ENCODE measurements at regions of chr16 and their contacts with region 1.

Region 1: GRCh38 chr16:19886073-19886941 is 1.7 kb upstream of the GPRC5B start:
- DNase-seq: peak; percentile 94
- H3K4me3 ChIP-seq: peak overlapping the region; percentile 65 to 85 (median 68)
- H3K27ac ChIP-seq: no peak overlapping the region
- H3K4me1 ChIP-seq: peaks cover 12 to 43% (median 37%) of the 10 kb centered on the region in 4 donors
- H3K27me3 ChIP-seq: peaks cover 0 to 32% (median 3%) of the 10 kb centered on the region in 4 donors
- CTCF ChIP-seq: peak; percentile 98 to 99 (median 99)
- EP300 ChIP-seq: no peak
- POLR2A ChIP-seq: no peak

Region 2: GRCh38 chr16:19555162-19555937 is 331.0 kb before region 1 on chr16 and contains the start of gene VPS35L:
- intact Hi-C with region 1: loop called (anchors 1 kb)
- DNase-seq: peak; percentile 99
- H3K4me3 ChIP-seq: peak within 1 kb of the TSS; percentile 78 to 93 (median 90)
- H3K27ac ChIP-seq: peak within 1 kb of the TSS; percentile 86 to 89 (median 88)
- H3K4me1 ChIP-seq: peaks cover 5 to 32% (median 23%) of the 10 kb centered on the region in 4 donors
- H3K27me3 ChIP-seq: no peaks in the 10 kb centered on the region
- CTCF ChIP-seq: peak; percentile 65 to 74 (median 70)
- EP300 ChIP-seq: no peak
- POLR2A ChIP-seq: no peak
- total RNA-seq, gene VPS35L: 35.5 to 47.0 (median 38.1) TPM

Region 3: DNA sequence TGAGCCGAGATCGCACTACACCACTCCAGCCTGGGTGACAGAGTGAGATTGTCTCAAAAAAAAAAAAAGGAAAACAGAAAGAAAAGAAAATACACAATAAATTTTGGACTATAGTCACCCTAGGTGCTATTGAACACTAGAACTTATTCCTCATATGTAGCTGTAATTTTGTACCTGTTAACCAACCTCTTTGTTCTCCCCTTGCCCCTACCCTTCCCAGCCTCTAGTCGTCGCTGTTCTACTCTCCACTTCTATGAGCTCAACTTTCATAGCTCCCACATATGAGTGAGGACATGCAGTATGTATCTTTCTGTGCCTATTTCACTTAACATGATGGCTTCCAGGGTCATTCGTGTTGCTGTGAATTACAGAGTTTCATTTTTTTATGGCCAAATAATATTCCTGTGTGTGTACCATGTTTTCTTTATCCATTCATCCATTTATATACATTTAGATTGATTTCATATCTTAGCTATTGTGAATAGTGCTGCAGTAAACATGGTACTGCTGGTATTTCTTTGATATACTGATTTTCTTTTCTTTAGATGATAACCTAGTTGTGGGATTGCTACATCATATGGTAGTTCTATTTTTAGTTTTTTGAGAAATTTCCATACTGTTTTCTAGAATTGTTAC is 302.5 kb before region 1 on chr16:
- intact Hi-C with region 1: loop called (anchors 5 kb)
- DNase-seq: no peak
- H3K4me3 ChIP-seq: no peak overlapping the region
- H3K27ac ChIP-seq: no peak overlapping the region
- H3K4me1 ChIP-seq: peaks cover 11 to 17% (median 15%) of the 10 kb centered on the region in 4 donors
- H3K27me3 ChIP-seq: no peaks in the 10 kb centered on the region
- CTCF ChIP-seq: peak; percentile 65 to 91 (median 69)
- EP300 ChIP-seq: no peak
- POLR2A ChIP-seq: no peak

Region 4: GRCh38 chr16:19601083-19601976 is 285.0 kb before region 1 on chr16:
- intact Hi-C with region 1: loop called (anchors 2 kb)
- DNase-seq: no peak
- H3K4me3 ChIP-seq: no peak overlapping the region
- H3K27ac ChIP-seq: no peak overlapping the region
- H3K4me1 ChIP-seq: peaks cover 0 to 6% (median 2%) of the 10 kb centered on the region in 4 donors
- H3K27me3 ChIP-seq: no peaks in the 10 kb centered on the region
- CTCF ChIP-seq: peak; percentile 49 to 63 (median 62)
- EP300 ChIP-seq: no peak
- POLR2A ChIP-seq: no peak

Region 5: GRCh38 chr16:19717771-19718602 is 168.3 kb before region 1 on chr16 and contains the starts of genes IQCK and KNOP1:
- intact Hi-C with region 1: loop called (anchors 5 kb)
- DNase-seq: peak; percentile 97
- H3K4me3 ChIP-seq: peak within 1 kb of the TSS; percentile 86 to 97 (median 92)
- H3K27ac ChIP-seq: peak within 1 kb of the TSS; percentile 77 to 93 (median 86)
- H3K4me1 ChIP-seq: peaks cover 29 to 40% (median 34%) of the 10 kb centered on the region in 4 donors
- H3K27me3 ChIP-seq: no peaks in the 10 kb centered on the region
- CTCF ChIP-seq: peak in 1 of 3 experiments; percentile 10
- EP300 ChIP-seq: no peak
- POLR2A ChIP-seq: peak; percentile 51
- total RNA-seq, gene IQCK: 7.4 to 10.4 (median 8.6) TPM
- total RNA-seq, gene KNOP1: 7.3 to 9.9 (median 9.1) TPM